ENCODE measurements at regions of chr17 and their contacts with region 1.

Region 1: GRCh38 chr17:6843241-6843880 is 11.8 kb upstream of the TEKT1 start:
- DNase-seq: peak; percentile 23
- H3K27ac ChIP-seq: no peak overlapping the region
- CTCF ChIP-seq: peak; percentile 66

Region 2: DNA sequence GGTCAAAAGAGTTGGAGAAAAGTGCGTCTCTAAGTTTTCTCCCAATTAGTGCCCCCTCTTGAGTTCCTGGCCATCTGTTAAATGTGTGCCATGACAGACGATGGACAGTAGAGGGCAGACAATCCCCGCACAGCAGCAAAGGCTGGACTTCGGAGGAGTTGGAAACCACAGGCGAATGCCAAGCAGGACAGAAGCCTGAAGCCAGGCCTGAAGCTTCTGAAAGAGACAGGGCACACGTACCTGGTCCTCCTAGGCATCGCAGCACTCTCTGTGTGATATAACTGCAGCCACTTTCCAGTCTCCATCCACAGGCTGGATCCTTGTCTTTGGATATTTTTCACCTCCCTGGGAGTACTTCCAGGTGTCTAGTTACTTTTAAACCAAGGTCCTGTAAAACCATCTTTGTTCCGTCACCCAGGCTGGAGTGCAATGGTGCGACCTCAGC is 177.3 kb before region 1 on chr17:
- CTCF ChIA-PET with region 1: interaction called, 26 read pairs
- POLR2A ChIA-PET with region 1: interaction called, 3 read pairs
- DNase-seq: peak; percentile 74
- H3K27ac ChIP-seq: peak overlapping the region; percentile 91
- CTCF ChIP-seq: peak; percentile 93

Region 3: GRCh38 chr17:6831661-6832263 is 11.6 kb before region 1 on chr17 and contains the start of gene TEKT1:
- CTCF ChIA-PET with region 1: interaction called, 11 read pairs
- POLR2A ChIA-PET with region 1: no interaction called
- DNase-seq: peak; percentile 76
- H3K27ac ChIP-seq: no peak within 1 kb of the TSS
- CTCF ChIP-seq: no peak

Region 4: GRCh38 chr17:7004398-7005253 is 161.3 kb after region 1 on chr17:
- CTCF ChIA-PET with region 1: interaction called, 17 read pairs
- POLR2A ChIA-PET with region 1: no interaction called
- DNase-seq: no peak
- H3K27ac ChIP-seq: 0 out of 2 replicates have a peak overlapping the region, but pooled peaks have one; percentile 19
- CTCF ChIP-seq: peak; percentile 69

Measured in RWPE1 (cell line).